CD8-positive, alpha-beta T cell (primary cell): ENCODE measurements at regions of chr4 and their contacts with region 1.

Region 1: GRCh38 chr4:113901994-113902787 is 77.3 kb downstream of the ARSJ start:
- DNase-seq: peak; percentile 35 to 86 (median 66)
- ATAC-seq: peak; percentile 84
- H3K4me3 ChIP-seq: peak overlapping the region in 1 of 2 experiments; percentile 27
- H3K4me3 Mint-ChIP-seq: peak overlapping the region; percentile 51
- H3K27ac ChIP-seq: peak overlapping the region; percentile 49 to 73
- H3K27ac Mint-ChIP-seq: peak overlapping the region; percentile 90
- H3K4me1 ChIP-seq: peaks cover 80% of the 10 kb centered on the region
- H3K4me1 Mint-ChIP-seq: peaks cover 80% of the 10 kb centered on the region
- H3K27me3 ChIP-seq: no peaks in the 10 kb centered on the region
- H3K27me3 Mint-ChIP-seq: no peaks in the 10 kb centered on the region
- CTCF ChIP-seq: peak; percentile 56

Region 2: DNA sequence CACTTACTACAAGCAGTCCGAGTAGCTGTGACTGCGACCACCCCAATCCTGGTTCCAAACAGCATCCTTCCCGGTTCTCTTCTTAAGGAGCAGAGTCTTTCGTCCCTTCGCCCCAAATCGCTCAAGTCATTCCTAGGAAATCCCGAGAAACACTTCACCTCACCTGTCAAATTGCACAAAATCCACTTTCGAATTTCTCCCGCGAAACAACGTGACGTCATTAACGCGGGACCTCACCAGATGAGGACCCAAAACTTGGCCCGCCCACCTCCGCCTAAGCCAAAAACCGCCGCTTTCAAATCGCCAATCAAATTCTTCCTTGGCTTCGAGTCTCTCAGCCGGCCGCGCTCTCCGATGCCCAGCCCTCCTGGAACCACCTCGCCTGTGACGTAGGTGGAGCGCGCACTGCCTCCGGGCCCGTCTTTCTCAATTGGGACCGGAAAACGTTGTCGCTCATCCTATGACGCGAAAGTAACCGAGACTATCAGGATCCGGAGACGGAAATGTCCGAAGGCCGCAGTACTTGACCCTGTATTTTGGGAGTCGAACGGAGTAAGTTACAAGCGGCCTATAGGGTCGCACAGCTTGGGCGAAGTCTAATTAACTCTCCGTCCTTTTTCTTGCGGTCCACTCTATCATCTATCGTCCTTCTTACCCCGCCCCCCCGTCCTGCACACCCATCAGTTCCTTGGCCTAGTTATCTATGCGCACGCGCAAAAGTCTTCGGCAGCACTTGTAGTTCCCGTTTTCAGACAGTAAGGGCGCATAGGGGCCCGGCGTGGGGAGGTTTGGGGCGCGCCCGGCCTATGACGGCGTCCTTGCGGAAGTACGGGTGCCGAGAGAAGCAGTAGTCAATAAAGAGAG is 1265.3 kb before region 1 on chr4 and contains the starts of genes LARP7 and ZGRF1:
- CTCF ChIA-PET with region 1: no interaction called
- POLR2A ChIA-PET with region 1: no interaction called
- intact Hi-C with region 1: no loop called
- DNase-seq: peak; percentile 95 to 100 (median 98)
- ATAC-seq: peak; percentile 86
- H3K4me3 ChIP-seq: peak within 1 kb of the TSS; percentile 74 to 76
- H3K4me3 Mint-ChIP-seq: no peak within 1 kb of the TSS
- H3K27ac ChIP-seq: peak within 1 kb of the TSS; percentile 97 to 99
- H3K27ac Mint-ChIP-seq: no peak within 1 kb of the TSS
- H3K4me1 ChIP-seq: peaks cover 19% of the 10 kb centered on the region
- H3K4me1 Mint-ChIP-seq: peaks cover 17% of the 10 kb centered on the region
- H3K27me3 ChIP-seq: no peaks in the 10 kb centered on the region
- H3K27me3 Mint-ChIP-seq: no peaks in the 10 kb centered on the region
- CTCF ChIP-seq: peak; percentile 89
- total RNA-seq, gene LARP7: 46.7 to 47.2 TPM
- total RNA-seq, gene ZGRF1: 7.9 to 9.1 TPM

Region 3: DNA sequence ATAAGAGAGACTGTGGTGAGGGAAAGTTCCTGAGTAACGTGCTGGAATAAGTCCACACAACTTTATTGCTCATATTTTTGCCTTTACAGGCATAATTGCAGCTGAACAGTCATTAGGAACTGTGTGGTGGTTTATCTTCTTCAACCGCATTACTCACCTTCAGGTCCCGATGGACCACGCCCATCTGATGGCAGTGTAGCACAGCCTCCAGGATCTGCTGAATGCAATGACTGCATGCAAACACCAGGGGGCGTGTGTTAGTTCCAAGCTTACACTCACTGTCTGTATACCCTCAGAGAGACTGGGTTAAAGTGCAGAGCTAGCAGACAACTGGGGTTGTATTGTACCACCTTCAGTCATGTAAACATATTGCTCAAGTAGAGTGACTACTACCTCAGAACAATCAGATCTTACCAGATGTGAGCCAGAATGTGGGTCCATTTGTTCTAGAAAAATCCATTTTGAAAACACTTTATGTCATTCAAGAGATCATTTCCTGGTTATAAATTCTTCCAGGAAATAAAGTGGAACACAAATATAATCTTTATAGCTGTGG is 354.6 kb before region 1 on chr4:
- CTCF ChIA-PET with region 1: interaction called, 10 read pairs
- POLR2A ChIA-PET with region 1: no interaction called
- intact Hi-C with region 1: loop called in 1 of 2 experiments (anchors 2 kb)
- DNase-seq: peak; percentile 73 to 95 (median 87)
- ATAC-seq: peak; percentile 100
- H3K4me3 ChIP-seq: no peak overlapping the region
- H3K4me3 Mint-ChIP-seq: no peak overlapping the region
- H3K27ac ChIP-seq: no peak overlapping the region
- H3K27ac Mint-ChIP-seq: peak overlapping the region; percentile 70
- H3K4me1 ChIP-seq: peaks cover 11% of the 10 kb centered on the region
- H3K4me1 Mint-ChIP-seq: peaks cover 12% of the 10 kb centered on the region
- H3K27me3 ChIP-seq: no peaks in the 10 kb centered on the region
- H3K27me3 Mint-ChIP-seq: no peaks in the 10 kb centered on the region
- CTCF ChIP-seq: peak; percentile 94

Region 4: DNA sequence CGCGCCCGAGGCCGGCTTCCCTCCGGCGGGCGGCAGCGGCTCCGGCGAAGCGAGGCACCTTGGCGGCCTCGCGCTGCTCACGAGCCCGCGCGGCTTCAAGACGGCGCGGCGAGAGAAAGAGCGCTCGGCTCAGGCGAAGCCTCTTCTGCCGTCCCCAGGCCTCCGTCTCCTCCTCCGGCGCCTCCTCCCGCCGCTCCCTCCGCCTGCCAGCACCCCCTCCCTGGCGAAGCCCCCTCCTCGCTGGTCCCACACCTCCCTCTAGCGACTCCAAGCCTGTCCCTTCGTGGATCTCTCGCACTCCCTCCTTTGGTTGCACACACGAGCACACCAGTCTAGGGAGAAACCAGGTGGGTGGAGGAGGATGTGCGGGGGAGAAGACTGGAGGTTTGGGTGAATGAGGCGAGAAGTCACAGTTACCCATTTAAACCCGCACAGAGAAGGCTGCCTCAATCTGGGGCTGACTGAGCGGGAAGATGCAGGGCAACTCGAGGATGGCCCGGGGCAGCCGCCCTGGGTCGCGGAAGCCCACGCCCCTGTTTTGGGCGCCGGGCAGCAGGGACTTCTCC is 140.5 kb before region 1 on chr4 and contains the start of gene CAMK2D:
- CTCF ChIA-PET with region 1: no interaction called
- POLR2A ChIA-PET with region 1: interaction called, 4 read pairs
- intact Hi-C with region 1: loop called (anchors 1 to 5 kb)
- DNase-seq: peak; percentile 62 to 95 (median 80)
- ATAC-seq: peak; percentile 58
- H3K4me3 ChIP-seq: peak within 1 kb of the TSS; percentile 75 to 85
- H3K4me3 Mint-ChIP-seq: peak within 1 kb of the TSS; percentile 94
- H3K27ac ChIP-seq: peak within 1 kb of the TSS; percentile 96
- H3K27ac Mint-ChIP-seq: peak within 1 kb of the TSS; percentile 98
- H3K4me1 ChIP-seq: peaks cover 26% of the 10 kb centered on the region
- H3K4me1 Mint-ChIP-seq: peaks cover 38% of the 10 kb centered on the region
- H3K27me3 ChIP-seq: no peaks in the 10 kb centered on the region
- H3K27me3 Mint-ChIP-seq: no peaks in the 10 kb centered on the region
- CTCF ChIP-seq: no peak
- total RNA-seq, gene CAMK2D: 29.6 to 31.1 TPM

Region 5: DNA sequence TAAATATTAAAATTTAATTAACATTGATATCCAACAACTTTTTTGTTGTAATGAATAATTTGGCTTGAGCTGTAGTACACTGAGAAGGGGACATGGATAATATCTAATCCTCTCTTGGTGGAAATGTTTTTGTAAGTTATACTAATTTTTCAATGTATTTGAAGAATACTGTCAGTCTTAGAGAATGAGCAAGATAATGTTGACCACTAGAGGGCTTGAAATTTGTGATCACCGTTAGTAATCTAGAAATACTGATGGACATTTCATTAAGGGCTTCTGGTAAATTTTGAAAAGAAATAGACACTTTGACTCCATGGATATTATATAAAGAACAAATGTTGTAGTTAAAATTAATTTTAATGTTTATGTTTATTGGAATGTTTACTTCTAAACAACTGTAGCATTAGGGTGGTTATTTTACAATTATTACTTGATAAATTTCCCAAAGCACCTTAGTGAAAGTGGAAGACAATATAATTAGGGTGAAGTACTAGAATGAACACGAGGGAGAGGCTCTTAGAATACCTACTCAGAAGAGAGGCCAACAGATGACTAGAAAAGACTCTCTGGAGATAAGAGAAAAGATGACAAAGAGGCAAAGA is 120.7 kb before region 1 on chr4:
- CTCF ChIA-PET with region 1: interaction called, 3 read pairs
- POLR2A ChIA-PET with region 1: interaction called, 3 read pairs
- intact Hi-C with region 1: loop called in 1 of 2 experiments (anchors 5 kb)
- DNase-seq: peak in 2 of 9 experiments; percentile 48 to 61
- ATAC-seq: no peak
- H3K4me3 ChIP-seq: no peak overlapping the region
- H3K4me3 Mint-ChIP-seq: no peak overlapping the region
- H3K27ac ChIP-seq: no peak overlapping the region
- H3K27ac Mint-ChIP-seq: no peak overlapping the region
- H3K4me1 ChIP-seq: no peaks in the 10 kb centered on the region
- H3K4me1 Mint-ChIP-seq: peaks cover 4% of the 10 kb centered on the region
- H3K27me3 ChIP-seq: no peaks in the 10 kb centered on the region
- H3K27me3 Mint-ChIP-seq: no peaks in the 10 kb centered on the region
- CTCF ChIP-seq: peak; percentile 72

Region 6: DNA sequence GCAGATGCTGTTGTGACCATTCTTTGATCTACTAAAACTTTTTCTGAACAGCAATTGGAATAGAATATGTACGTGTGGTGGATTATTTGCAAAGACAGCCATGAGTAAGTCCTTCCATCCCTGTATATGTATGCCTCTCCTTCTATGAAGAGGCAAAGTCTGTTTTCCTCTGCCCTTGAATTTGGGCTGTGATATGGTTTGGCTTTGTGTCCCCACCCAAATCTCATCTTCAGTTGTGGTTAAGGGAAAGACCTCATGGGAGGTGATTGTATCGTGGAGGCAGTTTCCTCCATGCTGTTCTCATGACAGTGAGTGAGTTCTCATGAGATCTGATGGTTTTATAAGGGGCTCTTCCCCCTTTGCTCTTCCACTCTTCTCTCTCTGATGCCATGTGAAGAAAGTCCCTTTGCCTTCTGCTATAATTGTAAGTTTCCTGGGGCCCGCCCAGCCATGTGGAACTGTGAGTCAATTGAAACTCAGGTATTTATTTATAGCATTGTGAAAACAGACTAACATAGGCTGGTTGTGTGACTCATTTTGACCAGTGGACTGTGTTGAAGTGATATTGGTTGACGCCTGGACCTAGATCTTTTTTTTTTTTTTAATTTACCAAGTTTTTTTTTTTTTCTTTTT is 32.3 kb before region 1 on chr4:
- CTCF ChIA-PET with region 1: no interaction called
- POLR2A ChIA-PET with region 1: no interaction called
- intact Hi-C with region 1: loop called in 1 of 2 experiments (anchors 5 kb)
- DNase-seq: peak in 1 of 9 experiments; percentile 9
- ATAC-seq: no peak
- H3K4me3 ChIP-seq: no peak overlapping the region
- H3K4me3 Mint-ChIP-seq: no peak overlapping the region
- H3K27ac ChIP-seq: no peak overlapping the region
- H3K27ac Mint-ChIP-seq: no peak overlapping the region
- H3K4me1 ChIP-seq: no peaks in the 10 kb centered on the region
- H3K4me1 Mint-ChIP-seq: peaks cover 9% of the 10 kb centered on the region
- H3K27me3 ChIP-seq: no peaks in the 10 kb centered on the region
- H3K27me3 Mint-ChIP-seq: no peaks in the 10 kb centered on the region
- CTCF ChIP-seq: no peak

Region 7: GRCh38 chr4:113878668-113879067 is 23.5 kb before region 1 on chr4:
- CTCF ChIA-PET with region 1: no interaction called
- POLR2A ChIA-PET with region 1: no interaction called
- intact Hi-C with region 1: loop called in 1 of 2 experiments (anchors 1 kb)
- DNase-seq: peak in 2 of 9 experiments; percentile 12 to 17
- ATAC-seq: no peak
- H3K4me3 ChIP-seq: no peak overlapping the region
- H3K4me3 Mint-ChIP-seq: no peak overlapping the region
- H3K27ac ChIP-seq: no peak overlapping the region
- H3K27ac Mint-ChIP-seq: no peak overlapping the region
- H3K4me1 ChIP-seq: peaks cover 6% of the 10 kb centered on the region
- H3K4me1 Mint-ChIP-seq: peaks cover 5% of the 10 kb centered on the region
- H3K27me3 ChIP-seq: no peaks in the 10 kb centered on the region
- H3K27me3 Mint-ChIP-seq: no peaks in the 10 kb centered on the region
- CTCF ChIP-seq: no peak

Region 8: DNA sequence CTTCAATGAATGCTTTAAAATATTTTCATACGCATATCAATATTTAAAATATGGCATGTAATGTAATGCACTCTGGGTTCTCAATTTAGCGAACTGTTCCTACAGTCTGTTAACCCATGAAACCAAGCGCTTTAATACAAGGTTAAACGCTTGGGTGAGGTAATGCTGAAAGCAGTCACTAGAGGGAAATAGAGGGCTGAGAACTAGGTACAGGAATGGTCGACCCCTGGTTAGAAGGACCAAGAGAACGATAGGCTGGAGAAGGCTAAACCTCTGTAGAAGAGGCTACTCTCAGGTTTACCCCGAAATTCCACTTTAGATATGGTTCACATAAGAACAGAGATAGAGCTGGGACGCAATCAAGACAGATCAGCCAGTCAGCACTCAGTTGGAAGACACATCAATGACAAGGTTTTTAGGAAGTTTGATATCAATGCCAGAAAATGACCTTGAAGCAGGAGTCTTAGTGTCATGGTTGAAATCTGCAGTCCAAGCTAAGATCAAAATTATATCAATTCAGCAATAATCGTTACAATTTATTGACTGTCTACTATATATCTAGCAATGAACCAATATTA is 50.4 kb after region 1 on chr4:
- CTCF ChIA-PET with region 1: interaction called, 3 read pairs
- POLR2A ChIA-PET with region 1: no interaction called
- intact Hi-C with region 1: loop called in 1 of 2 experiments (anchors 2 kb)
- DNase-seq: peak in 2 of 9 experiments; percentile 48 to 57
- ATAC-seq: peak; percentile 71
- H3K4me3 ChIP-seq: no peak overlapping the region
- H3K4me3 Mint-ChIP-seq: no peak overlapping the region
- H3K27ac ChIP-seq: no peak overlapping the region
- H3K27ac Mint-ChIP-seq: no peak overlapping the region
- H3K4me1 ChIP-seq: no peaks in the 10 kb centered on the region
- H3K4me1 Mint-ChIP-seq: peaks cover 8% of the 10 kb centered on the region
- H3K27me3 ChIP-seq: no peaks in the 10 kb centered on the region
- H3K27me3 Mint-ChIP-seq: peaks cover 4% of the 10 kb centered on the region
- CTCF ChIP-seq: peak; percentile 78